Esophagus muscularis mucosa (tissue), 4 donors: ENCODE measurements at regions of chr17 and their contacts with region 1.

Region 1: DNA sequence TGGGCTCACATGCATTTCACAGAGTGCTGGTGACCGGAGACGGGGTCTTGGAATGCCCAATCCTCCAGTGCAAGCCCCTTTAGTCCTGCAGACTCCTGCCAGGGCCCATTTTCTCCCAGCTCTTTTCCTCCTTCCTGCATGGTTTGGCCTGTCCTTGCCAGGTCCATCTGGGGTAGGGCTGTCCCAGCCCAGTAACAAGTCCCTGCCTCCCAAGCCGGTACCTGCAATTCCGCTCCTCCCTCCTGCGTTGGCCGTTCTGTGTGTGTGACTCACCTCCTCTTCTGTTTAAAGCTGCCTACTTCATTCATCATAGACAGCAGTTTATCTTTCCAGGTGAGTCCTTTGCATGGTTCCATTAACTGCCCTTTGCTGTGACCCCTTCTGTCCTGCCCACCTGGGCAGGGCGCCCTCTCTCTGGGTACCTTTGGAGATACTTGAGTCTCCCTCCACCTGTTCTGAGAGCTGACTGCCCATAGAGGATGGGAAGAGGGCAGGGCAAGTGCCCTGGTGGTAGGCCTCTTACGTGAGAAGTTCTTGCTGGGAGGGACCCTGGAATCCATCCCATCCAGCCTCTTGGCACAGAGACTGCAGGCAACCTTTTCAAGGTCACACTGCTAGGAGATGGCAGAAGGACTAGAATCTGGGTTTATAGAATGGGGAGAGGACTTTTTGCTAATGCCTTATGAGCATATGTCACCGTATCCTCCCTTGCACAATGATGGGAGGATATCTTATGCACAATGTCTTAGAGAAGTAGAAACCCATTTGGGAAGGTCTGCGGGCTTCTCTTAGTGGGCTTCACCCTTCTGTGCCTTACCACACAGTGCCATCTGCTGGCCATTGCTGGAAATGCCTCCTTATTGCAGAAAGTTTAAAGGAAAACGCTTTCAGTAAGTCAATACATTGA is 29.7 kb upstream of the LGALS9 start:
- DNase-seq: peak; percentile 95
- H3K4me3 ChIP-seq: no peak overlapping the region
- H3K27ac ChIP-seq: no peak overlapping the region
- H3K4me1 ChIP-seq: peaks cover 3 to 31% (median 14%) of the 10 kb centered on the region in 4 donors
- H3K27me3 ChIP-seq: no peaks in the 10 kb centered on the region
- CTCF ChIP-seq: peak; percentile 90 to 95 (median 94)
- EP300 ChIP-seq: no peak
- POLR2A ChIP-seq: no peak

Region 2: GRCh38 chr17:27236717-27237315 is 364.5 kb before region 1 on chr17:
- intact Hi-C with region 1: loop called (anchors 2 kb)
- DNase-seq: no peak
- H3K4me3 ChIP-seq: no peak overlapping the region
- H3K27ac ChIP-seq: no peak overlapping the region
- H3K4me1 ChIP-seq: peaks cover 0 to 33% (median 11%) of the 10 kb centered on the region in 4 donors
- H3K27me3 ChIP-seq: no peaks in the 10 kb centered on the region
- CTCF ChIP-seq: peak; percentile 91 to 95 (median 94)
- EP300 ChIP-seq: no peak
- POLR2A ChIP-seq: no peak

Region 3: GRCh38 chr17:27353461-27354050 is 247.8 kb before region 1 on chr17:
- intact Hi-C with region 1: loop called (anchors 2 kb)
- DNase-seq: peak; percentile 97
- H3K4me3 ChIP-seq: peak overlapping the region; percentile 66 to 77 (median 71)
- H3K27ac ChIP-seq: peak overlapping the region; percentile 90 to 97 (median 94)
- H3K4me1 ChIP-seq: peaks cover 23 to 32% (median 28%) of the 10 kb centered on the region in 4 donors
- H3K27me3 ChIP-seq: no peaks in the 10 kb centered on the region
- CTCF ChIP-seq: peak in 2 of 3 experiments; percentile 99
- EP300 ChIP-seq: no peak
- POLR2A ChIP-seq: peak; percentile 70

Region 4: DNA sequence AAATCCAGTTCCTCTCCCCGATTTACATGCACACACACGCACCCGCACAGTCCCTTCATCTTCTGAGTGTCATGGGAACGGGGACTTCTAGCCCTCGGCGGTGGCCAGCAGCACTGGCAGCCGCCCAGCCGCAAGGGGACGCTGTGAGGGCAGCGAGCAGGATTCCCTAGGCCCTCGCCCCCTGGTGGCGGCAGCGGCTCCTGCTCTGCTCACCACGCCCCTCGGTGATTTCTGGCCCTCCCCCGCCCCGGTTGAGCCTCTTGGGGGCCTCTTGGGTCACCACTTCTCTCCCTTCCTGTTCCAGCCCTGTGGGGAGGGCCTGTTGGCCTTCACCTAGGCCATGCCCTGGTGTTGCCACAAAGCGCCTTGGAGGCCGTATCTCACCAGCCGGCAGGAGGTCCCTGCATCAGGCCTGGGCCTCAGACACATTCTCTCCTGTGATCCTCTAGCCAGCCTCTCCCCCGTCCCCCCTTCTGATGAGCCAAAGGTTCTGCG is 220.3 kb before region 1 on chr17:
- intact Hi-C with region 1: loop called (anchors 10 kb)
- DNase-seq: no peak
- H3K4me3 ChIP-seq: no peak overlapping the region
- H3K27ac ChIP-seq: no peak overlapping the region
- H3K4me1 ChIP-seq: peaks cover 16 to 37% (median 32%) of the 10 kb centered on the region in 4 donors
- H3K27me3 ChIP-seq: no peaks in the 10 kb centered on the region
- CTCF ChIP-seq: peak; percentile 47 to 77 (median 52)
- EP300 ChIP-seq: no peak
- POLR2A ChIP-seq: no peak

Region 5: GRCh38 chr17:27455914-27456680 is 145.2 kb before region 1 on chr17 and contains the start of gene KSR1:
- intact Hi-C with region 1: loop called (anchors 2 kb)
- DNase-seq: no peak
- H3K4me3 ChIP-seq: peak within 1 kb of the TSS; percentile 81 to 93 (median 88)
- H3K27ac ChIP-seq: peak within 1 kb of the TSS; percentile 87 to 93 (median 89)
- H3K4me1 ChIP-seq: peaks cover 23 to 40% (median 32%) of the 10 kb centered on the region in 4 donors
- H3K27me3 ChIP-seq: no peaks in the 10 kb centered on the region
- CTCF ChIP-seq: peak in 2 of 3 experiments; percentile 30 to 34
- EP300 ChIP-seq: no peak
- POLR2A ChIP-seq: no peak
- total RNA-seq, gene KSR1: 13.3 to 18.9 (median 13.7) TPM

Region 6: GRCh38 chr17:27494192-27495091 is 106.9 kb before region 1 on chr17:
- intact Hi-C with region 1: loop called (anchors 5 kb)
- DNase-seq: no peak
- H3K4me3 ChIP-seq: peak overlapping the region in 1 of 4 donors; percentile 18
- H3K27ac ChIP-seq: peak overlapping the region in 3 of 4 donors; percentile 42 to 64 (median 63)
- H3K4me1 ChIP-seq: peaks cover 27 to 33% (median 31%) of the 10 kb centered on the region in 4 donors
- H3K27me3 ChIP-seq: no peaks in the 10 kb centered on the region
- CTCF ChIP-seq: peak; percentile 26 to 44 (median 39)
- EP300 ChIP-seq: no peak
- POLR2A ChIP-seq: no peak

Region 7: GRCh38 chr17:27654654-27655524 is 53.6 kb after region 1 on chr17:
- intact Hi-C with region 1: loop called (anchors 2 kb)
- DNase-seq: no peak
- H3K4me3 ChIP-seq: no peak overlapping the region
- H3K27ac ChIP-seq: no peak overlapping the region
- H3K4me1 ChIP-seq: peaks cover 0 to 3% (median 0%) of the 10 kb centered on the region in 4 donors
- H3K27me3 ChIP-seq: peaks cover 0 to 10% (median 0%) of the 10 kb centered on the region in 4 donors
- CTCF ChIP-seq: peak; percentile 70 to 94 (median 73)
- EP300 ChIP-seq: no peak
- POLR2A ChIP-seq: no peak